ENCODE measurements at regions of chr11 and their contacts with region 1.

Region 1: DNA sequence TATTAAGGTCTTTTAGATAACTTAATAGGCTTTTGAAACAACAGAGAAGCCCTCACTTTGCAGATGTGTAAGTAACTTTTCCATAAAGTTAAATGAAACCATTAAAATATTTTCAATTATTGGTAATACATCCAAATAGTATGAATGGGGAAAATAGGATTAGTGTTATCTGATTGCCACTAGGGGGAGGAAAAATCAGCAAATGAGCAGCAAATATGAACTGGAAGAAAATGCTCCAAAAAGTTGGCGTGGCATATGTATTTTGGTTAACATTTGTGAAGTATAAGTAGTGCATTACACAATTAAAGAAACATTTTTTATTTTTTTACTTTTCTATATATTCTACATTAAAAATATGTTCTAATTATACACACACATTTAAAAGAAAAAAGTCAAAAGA is 259.8 kb upstream of the ANO5 start:
- DNase-seq: no peak
- ATAC-seq: no peak

Region 2: GRCh38 chr11:21736404-21736803 is 196.7 kb before region 1 on chr11:
- intact Hi-C with region 1: no loop called
- DNase-seq: no peak
- ATAC-seq: no peak

Region 3: DNA sequence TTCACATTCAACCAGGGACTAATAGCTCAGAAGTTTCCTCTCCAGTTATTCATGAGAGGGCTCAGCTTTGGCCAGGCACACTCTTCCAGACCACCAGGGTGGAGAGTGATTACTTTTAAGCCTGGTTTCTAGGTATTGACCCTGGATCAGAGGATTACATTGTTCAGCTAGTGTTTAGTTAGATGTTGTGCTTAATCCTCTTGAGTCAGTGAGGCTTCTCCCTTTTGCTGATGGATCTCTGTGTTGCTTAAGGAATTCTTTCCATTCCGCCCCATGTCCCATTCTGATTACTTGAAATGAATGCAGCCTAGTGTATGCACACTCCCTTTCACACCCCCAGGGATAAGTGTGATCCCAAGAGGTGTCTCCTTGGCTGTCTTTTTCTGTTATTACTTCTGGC is 11.9 kb before region 1 on chr11:
- intact Hi-C with region 1: no loop called
- DNase-seq: no peak
- ATAC-seq: no peak

Region 4: DNA sequence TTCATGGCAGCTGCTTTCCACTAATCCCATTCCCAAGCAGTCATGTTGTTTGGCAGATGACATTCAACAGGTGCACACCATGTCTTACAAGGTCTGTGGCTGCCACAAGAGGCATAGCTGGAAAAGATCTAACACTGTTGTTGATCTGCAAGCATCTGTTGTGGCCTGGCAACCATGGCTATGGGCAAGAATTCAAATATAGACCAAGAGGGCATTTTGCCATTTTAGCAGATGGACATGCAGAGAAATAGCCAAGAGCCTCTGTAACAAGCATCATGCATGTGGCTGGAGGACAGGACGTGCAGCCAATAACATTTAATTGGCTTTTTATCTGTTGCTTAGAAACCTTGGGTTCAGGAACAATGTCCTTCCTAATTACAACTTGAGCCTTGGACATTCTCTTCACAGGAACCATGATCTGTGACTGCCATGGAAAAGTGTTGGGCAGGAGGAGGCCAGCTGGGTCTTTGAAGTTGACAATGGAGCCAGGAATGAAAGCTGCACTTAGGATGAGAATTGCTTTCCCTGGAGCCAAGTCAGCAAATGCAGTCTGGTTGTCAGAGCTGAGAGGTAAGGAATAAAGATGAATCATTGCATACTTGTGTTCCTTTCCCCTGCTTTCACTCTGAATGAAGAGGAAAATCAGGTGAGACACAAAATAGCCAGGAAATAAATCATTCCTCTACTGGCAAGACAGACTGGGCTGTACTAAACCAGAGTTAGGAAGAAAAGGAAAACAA is 146.2 kb after region 1 on chr11:
- intact Hi-C with region 1: no loop called
- DNase-seq: no peak
- ATAC-seq: peak; percentile 74

Region 5: DNA sequence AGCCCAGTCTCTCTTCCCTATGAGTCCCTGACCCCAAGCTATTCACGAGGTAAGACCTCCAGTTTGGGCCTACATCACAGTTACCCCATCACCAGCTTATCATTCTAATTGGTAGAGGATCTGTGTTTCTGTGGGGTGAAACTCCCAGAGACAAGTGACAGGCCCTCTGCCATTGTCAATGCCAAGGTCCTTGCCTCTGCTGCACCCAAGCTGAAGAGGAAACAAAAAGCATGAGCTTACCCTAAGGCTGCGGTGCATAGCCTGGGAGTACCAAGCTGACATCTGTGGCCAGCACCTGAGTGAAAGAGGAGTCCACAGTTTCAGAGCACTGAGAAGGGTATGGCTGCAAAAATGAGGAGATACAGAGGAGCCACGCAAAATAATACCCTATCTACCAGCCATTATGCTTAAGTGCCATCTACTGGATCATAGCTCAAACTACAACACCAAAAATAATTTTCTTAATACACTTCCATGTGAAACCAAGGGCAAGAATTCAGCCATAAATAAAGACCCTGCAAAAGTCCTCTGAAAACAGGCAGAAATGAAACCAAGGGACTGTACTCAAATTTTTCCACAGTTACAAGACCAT is 197.5 kb after region 1 on chr11:
- intact Hi-C with region 1: loop called (anchors 10 kb)
- DNase-seq: no peak
- ATAC-seq: peak; percentile 39

Region 6: DNA sequence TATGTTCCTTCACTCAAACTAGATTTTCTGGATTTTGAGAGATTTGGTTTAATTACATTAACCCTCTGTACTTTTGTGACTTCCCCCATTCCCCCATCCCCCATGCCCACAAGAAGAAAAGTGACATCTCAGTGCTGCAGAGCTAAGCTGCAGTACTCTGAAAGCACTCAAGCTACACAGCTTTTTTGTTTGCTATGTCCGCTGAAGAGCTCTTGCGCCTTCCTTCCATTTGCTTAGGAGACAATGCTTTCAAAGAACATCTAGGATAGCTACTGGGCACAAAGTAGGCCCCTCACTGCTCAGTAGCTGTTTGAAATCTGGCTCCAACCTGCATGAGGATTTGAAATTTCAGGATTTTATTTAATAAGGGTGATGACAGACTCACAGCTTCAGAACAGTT is 474.8 kb after region 1 on chr11:
- intact Hi-C with region 1: no loop called
- DNase-seq: no peak
- ATAC-seq: no peak

Measured in Right ventricle myocardium inferior (tissue), 1 donor.